Dendritic cell treated with granulocyte-macrophage colony-stimulating factor and Interleukin-4, amounts not matched to agents 40 ng/mL and 50 ng/mL, for 4 days (primary cell): ENCODE measurements at regions of chr12 and their contacts with region 1.

Region 1: GRCh38 chr12:117587631-117588287 is 226.3 kb upstream of the NOS1 start:
- H3K4me3 Mint-ChIP-seq: no peak overlapping the region
- H3K27ac Mint-ChIP-seq: no peak overlapping the region
- H3K4me1 Mint-ChIP-seq: no peaks in the 10 kb centered on the region
- H3K27me3 Mint-ChIP-seq: peaks cover 21% of the 10 kb centered on the region

Region 2: DNA sequence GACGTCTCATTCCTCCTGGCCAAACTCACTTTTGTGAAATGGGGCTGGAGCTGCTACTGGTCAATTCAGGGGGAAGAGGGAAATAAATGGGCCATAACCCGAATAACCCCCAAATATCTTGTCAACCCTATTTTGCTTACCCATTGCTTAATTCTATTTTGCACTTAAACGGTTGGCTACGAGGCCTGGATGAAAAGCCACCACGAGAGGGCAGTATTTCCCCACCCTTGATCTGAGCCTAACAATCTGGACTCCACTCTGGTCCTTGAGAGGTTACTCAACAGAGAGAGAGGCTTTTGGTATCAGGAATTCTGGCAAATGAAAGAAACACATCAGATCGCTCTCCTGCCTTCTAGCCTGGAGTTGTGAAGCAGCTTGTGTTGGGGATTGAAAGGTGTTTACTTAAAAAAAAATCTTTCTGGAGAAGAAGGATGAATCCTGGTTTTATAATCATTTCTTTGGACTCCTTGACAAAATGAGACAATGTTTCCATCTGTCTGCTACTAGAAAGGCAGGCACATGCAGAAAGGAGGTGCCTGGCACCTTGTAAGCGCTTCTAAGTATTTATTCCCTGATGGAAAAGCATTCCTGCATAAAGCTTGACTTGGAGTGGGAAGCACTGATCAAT is 375.1 kb before region 1 on chr12:
- intact Hi-C with region 1: loop called (anchors 10 kb)
- H3K4me3 Mint-ChIP-seq: no peak overlapping the region
- H3K27ac Mint-ChIP-seq: no peak overlapping the region
- H3K4me1 Mint-ChIP-seq: no peaks in the 10 kb centered on the region
- H3K27me3 Mint-ChIP-seq: peaks cover 24% of the 10 kb centered on the region